Endothelial cell of umbilical vein (primary cell): ENCODE measurements at regions of chr19 and their contacts with region 1.

Region 1: DNA sequence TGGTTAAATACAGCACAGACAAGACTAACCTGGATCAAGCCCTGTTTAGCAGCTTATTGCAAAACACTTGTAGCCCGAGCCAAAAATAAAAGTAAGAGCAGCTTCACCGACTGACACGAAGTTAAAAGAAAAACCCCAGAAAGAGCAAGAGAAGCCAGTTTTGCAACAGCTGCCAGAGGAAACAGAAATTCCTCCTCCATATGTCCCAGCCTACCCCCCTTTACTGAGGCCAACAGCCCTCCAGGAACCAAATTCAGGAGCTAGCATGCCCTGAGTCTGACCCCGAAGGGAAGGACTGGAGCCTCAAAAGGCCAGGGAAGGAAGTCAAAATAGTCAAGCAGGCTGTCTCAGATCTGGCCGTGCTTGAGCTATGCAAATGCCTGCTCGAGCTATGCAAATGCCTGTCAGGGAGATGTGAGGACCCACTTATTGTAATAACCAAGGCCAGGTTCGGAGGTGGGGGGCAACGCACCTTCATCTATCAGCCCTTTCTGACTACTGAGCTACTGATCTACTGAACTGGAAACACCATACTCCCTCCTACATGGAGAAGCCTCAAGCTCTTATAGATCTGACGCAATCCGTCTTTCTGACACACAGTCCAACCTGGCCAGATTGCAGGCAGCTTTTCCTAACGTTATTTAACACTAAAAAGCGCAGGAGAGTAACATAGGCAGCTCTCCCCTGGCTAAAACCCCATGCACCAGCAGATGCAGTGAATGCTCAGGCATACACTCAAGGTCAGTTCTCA is 6.7 kb downstream of the SIGLEC11 start:
- DNase-seq: no peak
- H3K4me3 ChIP-seq: no peak overlapping the region
- H3K27ac ChIP-seq: no peak overlapping the region
- H3K4me1 ChIP-seq: peaks cover 5% of the 10 kb centered on the region
- H3K27me3 ChIP-seq: peaks cover 9 to 16% of the 10 kb centered on the region in 2 experiments
- CTCF ChIP-seq: no peak
- POLR2A ChIP-seq: no peak

Region 2: GRCh38 chr19:49533551-49534488 is 420.4 kb before region 1 on chr19:
- CTCF ChIA-PET with region 1: no interaction called
- POLR2A ChIA-PET with region 1: no interaction called
- dilution Hi-C with region 1: no loop called
- intact Hi-C with region 1: no loop called
- DNase-seq: peak; percentile 85
- H3K4me3 ChIP-seq: peak overlapping the region; percentile 15 to 53 (median 38)
- H3K27ac ChIP-seq: no peak overlapping the region
- H3K4me1 ChIP-seq: peaks cover 7% of the 10 kb centered on the region
- H3K27me3 ChIP-seq: no peaks in the 10 kb centered on the region
- CTCF ChIP-seq: peak; percentile 32 to 53
- POLR2A ChIP-seq: no peak

Region 3: DNA sequence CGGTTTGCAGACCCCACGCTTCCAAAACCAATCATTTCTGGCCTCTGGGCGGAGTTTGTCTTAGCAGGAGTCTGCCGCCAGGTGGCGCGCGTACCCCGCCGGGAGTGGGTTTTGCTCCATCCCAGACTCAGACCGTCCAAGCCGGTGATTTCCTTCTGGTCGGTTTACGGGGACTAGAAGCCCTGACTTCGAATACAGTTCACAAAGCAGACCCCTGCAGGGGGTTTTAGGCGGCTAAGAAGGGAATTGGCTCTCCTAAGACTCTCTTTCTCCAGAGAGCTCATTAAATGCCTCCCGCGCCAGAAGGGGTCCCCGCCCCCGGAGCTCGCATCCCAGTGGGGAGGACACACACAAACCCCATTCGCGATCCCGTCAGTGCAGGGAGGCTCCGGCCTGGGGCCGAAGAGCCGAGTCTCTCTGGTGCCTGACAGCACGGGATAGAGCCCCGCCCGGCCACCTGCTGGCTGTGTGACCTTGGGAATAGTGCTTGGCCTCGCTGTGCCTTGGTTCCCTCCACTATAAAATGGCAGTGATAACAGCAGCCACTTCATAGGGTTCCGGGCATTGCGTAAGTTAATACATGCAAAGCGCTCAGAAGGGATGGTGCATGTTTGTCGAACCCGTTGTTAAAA is 16.4 kb before region 1 on chr19:
- CTCF ChIA-PET with region 1: interaction called, 12 read pairs
- POLR2A ChIA-PET with region 1: no interaction called
- dilution Hi-C with region 1: no loop called
- intact Hi-C with region 1: no loop called
- DNase-seq: peak; percentile 67
- H3K4me3 ChIP-seq: peak overlapping the region in 1 of 3 experiments; percentile 19
- H3K27ac ChIP-seq: no peak overlapping the region
- H3K4me1 ChIP-seq: peaks cover 3% of the 10 kb centered on the region
- H3K27me3 ChIP-seq: no peaks in the 10 kb centered on the region
- CTCF ChIP-seq: peak; percentile 83 to 97
- POLR2A ChIP-seq: no peak